MCF 10A (cell line): ENCODE measurements at regions of chr2 and their contacts with region 1.

Region 1: GRCh38 chr2:1823187-1824169 is 79.2 kb upstream of the PXDN start:
- DNase-seq: no peak
- H3K4me3 Mint-ChIP-seq: no peak overlapping the region
- H3K27ac Mint-ChIP-seq: no peak overlapping the region
- H3K4me1 Mint-ChIP-seq: no peaks in the 10 kb centered on the region
- H3K27me3 Mint-ChIP-seq: peaks cover 28% of the 10 kb centered on the region
- CTCF ChIP-seq: no peak

Region 2: DNA sequence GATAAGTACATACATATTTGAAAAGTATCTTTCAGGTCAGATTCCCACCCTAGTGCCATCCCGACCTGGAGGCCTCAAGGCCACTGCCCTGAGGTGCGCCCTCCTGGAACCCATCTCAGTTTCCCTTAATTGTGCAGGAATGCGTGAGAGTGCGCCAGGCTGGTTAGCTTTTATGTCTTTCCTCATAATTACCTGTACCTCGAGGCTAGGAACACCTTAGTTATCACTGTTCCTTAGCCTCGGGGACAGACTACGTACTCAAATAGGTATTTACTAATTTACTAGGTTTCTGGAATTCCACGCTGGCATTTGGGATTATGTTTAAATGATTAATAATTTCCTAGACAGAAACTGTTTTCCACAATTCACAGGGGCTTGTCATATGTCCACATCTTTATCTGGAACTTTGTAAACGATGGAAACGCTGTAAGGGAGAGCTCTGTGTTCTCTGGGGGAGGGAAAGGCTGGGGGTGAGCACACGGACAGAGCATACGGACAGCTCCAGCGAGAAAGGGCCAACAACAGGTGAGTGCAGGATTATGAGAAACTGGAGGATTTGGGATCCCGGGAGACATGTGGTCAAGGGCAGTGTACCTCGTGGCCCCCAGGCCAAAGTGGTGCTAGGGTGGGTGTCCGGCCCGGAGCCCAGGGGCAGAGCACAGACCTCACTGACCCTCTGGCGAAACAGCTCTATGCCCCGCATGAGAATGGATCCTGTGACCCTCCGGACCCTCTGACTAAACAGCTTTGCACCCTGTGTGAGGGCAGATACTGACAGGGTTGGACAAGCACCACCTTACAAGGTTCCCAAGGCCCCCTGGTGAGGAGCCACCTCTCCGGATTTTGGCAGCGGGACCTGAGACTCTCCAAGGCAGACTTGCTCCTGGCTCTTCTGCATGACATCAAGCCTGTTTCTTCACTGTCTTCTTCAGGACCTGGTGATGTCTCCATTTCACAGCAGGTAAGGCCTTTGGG is 22.9 kb after region 1 on chr2:
- CTCF ChIA-PET with region 1: no interaction called
- POLR2A ChIA-PET with region 1: no interaction called
- intact Hi-C with region 1: loop called (anchors 1 kb)
- DNase-seq: no peak
- H3K4me3 Mint-ChIP-seq: no peak overlapping the region
- H3K27ac Mint-ChIP-seq: no peak overlapping the region
- H3K4me1 Mint-ChIP-seq: no peaks in the 10 kb centered on the region
- H3K27me3 Mint-ChIP-seq: peaks cover 62% of the 10 kb centered on the region
- CTCF ChIP-seq: no peak